Activated T-helper 2 cell treated with anti-CD3 and anti-CD28 coated beads, Interferon-gamma antibody, Interleukin-2, Interleukin-4, amounts not matched to agents 10 μg/mL and 5 μg/mL and 100 μg/mL, durations not matched to agents 14 hours and 24 hours and 36 hours (primary cell): ENCODE measurements at regions of chr1 and their contacts with region 1.

Region 1: DNA sequence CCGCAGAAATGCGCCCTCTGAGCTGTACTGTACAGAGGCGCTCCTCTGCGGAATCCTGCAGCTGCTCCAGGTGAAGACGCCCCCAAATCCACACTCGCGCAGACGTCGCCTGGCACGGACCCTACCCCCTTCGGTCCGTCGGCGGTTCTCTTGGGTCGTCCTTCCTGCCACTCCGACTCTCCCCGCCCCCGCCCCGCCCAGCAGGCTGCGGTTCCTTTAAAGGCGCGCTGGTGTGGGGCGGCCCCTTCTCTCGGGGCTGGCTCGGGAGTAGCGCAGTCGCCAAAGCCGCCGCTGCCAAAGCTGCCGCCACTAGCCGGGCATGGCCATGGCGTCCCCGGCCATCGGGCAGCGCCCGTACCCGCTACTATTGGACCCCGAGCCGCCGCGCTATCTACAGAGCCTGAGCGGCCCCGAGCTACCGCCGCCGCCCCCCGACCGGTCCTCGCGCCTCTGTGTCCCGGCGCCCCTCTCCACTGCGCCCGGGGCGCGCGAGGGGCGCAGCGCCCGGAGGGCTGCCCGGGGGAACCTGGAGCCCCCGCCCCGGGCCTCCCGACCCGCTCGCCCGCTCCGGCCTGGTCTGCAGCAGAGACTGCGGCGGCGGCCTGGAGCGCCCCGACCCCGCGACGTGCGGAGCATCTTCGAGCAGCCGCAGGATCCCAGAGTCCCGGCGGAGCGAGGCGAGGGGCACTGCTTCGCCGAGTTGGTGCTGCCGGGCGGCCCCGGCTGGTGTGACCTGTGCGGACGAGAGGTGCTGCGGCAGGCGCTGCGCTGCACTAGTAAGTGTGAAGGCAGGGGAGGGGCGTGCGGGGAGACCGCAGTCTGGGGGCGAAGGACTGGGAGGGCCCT is at the start of gene RASSF5:
- DNase-seq: peak; percentile 74
- H3K4me3 Mint-ChIP-seq: peak within 1 kb of the TSS; percentile 75
- H3K27ac Mint-ChIP-seq: no peak within 1 kb of the TSS
- H3K4me1 Mint-ChIP-seq: peaks cover 30% of the 10 kb centered on the region
- H3K27me3 Mint-ChIP-seq: peaks cover 18% of the 10 kb centered on the region
- total RNA-seq, gene RASSF5: 180 and 182 TPM in 2 replicates

Region 2: DNA sequence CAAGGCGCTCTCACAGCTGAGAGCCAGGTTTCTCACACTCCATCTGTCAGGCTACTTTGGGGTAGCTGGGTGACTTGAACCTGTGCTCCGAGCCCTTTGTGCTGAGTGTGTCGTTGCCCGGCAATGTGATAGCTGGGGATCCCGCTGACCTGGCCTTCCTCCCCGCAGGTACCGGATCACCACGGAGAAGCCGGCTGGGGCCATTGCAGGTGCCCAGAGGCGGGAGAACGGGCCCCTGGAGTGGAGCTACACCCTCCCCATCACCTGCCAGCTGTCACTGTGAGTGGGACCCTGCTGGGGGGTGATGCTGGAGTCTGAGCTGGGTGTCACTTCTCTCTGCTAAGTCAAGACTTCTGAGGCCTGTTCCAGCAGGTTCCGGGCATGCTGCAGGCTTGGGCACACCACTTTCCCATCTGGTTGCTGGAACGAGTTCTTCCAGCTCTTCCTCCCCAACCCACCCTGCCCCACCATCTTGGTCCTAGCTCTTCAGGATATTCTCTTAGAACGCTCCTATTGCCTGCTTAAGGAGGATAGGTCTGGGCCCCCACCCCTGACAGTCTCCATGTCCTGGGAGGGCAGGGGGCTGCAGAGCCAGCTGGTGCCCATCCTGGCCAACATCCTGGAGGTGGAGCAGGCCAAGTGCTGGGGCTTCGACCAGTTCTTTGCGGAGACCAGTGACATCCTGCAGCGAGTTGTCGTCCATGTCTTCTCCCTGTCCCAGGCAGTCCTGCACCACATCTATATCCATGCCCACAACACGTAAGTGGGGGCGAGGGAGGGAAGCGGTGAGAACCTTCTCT is 29.7 kb before region 1 on chr1:
- intact Hi-C with region 1: no loop called
- DNase-seq: no peak
- H3K4me3 Mint-ChIP-seq: no peak overlapping the region
- H3K27ac Mint-ChIP-seq: no peak overlapping the region
- H3K4me1 Mint-ChIP-seq: peaks cover 30% of the 10 kb centered on the region
- H3K27me3 Mint-ChIP-seq: no peaks in the 10 kb centered on the region

Region 3: DNA sequence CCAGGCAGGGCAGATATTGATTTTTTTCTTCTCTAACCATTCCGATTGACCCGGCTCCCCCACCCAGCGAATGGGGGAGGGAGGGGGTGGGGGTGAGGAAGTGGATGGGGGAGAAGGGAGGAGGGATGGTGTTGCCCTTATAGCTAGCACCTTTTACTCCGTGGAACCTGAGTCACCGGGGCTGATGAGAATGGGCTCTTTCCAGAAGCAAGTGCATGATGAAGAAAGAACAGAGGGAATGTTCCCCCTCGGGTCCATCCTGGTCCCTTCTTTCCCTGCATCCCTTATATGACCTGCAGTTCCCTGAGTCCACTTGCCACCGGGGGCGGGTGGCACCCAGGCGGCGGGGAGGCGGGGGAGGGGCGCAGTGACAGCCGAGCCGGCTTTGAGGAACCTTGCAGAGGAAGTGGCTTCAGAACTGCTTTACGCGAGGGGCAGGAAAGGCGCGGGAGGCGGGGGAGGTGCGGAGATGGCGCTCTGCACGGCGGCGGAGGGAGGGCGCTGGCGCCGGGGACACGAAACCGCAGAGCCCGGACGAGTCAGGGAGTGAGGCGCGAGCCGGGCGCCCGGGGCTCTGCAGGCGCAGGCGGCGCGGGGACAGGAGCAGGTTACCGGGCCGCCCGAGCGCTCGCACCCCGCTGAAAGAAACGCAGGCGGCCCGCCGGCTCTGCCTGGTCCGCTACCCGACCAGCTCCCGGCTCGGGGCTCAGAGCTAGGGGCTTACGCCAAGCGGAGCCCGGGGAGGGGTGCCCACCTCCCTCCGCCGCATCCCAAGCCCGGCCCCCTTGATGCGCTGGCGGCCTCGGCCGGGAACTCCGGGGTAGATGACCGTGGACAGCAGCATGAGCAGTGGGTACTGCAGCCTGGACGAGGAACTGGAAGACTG is 49.5 kb after region 1 on chr1:
- intact Hi-C with region 1: loop called (anchors 1 kb)
- DNase-seq: peak; percentile 89
- H3K4me3 Mint-ChIP-seq: peak overlapping the region; percentile 97
- H3K27ac Mint-ChIP-seq: peak overlapping the region; percentile 95
- H3K4me1 Mint-ChIP-seq: peaks cover 65% of the 10 kb centered on the region
- H3K27me3 Mint-ChIP-seq: no peaks in the 10 kb centered on the region